Heart left ventricle (tissue), 16 donors: ENCODE measurements at regions of chr2 and their contacts with region 1.

Region 1: GRCh38 chr2:201084863-201085262 is 13.1 kb downstream of the NDUFB3 start:
- DNase-seq: no peak
- ATAC-seq: no peak
- H3K4me3 ChIP-seq: no peak overlapping the region
- H3K27ac ChIP-seq: no peak overlapping the region
- H3K4me1 ChIP-seq: peaks cover 0 to 4% (median 0%) of the 10 kb centered on the region in 12 donors
- H3K27me3 ChIP-seq: no peaks in the 10 kb centered on the region
- CTCF ChIP-seq: no peak
- POLR2A ChIP-seq: no peak

Region 2: GRCh38 chr2:200850512-200851256 is 234.2 kb before region 1 on chr2:
- intact Hi-C with region 1: no loop called
- DNase-seq: no peak
- ATAC-seq: peak; percentile 35 to 55 (median 40)
- H3K4me3 ChIP-seq: no peak overlapping the region
- H3K27ac ChIP-seq: no peak overlapping the region
- H3K4me1 ChIP-seq: peaks cover 0 to 3% (median 0%) of the 10 kb centered on the region in 12 donors
- H3K27me3 ChIP-seq: no peaks in the 10 kb centered on the region
- CTCF ChIP-seq: no peak
- POLR2A ChIP-seq: no peak

Region 3: DNA sequence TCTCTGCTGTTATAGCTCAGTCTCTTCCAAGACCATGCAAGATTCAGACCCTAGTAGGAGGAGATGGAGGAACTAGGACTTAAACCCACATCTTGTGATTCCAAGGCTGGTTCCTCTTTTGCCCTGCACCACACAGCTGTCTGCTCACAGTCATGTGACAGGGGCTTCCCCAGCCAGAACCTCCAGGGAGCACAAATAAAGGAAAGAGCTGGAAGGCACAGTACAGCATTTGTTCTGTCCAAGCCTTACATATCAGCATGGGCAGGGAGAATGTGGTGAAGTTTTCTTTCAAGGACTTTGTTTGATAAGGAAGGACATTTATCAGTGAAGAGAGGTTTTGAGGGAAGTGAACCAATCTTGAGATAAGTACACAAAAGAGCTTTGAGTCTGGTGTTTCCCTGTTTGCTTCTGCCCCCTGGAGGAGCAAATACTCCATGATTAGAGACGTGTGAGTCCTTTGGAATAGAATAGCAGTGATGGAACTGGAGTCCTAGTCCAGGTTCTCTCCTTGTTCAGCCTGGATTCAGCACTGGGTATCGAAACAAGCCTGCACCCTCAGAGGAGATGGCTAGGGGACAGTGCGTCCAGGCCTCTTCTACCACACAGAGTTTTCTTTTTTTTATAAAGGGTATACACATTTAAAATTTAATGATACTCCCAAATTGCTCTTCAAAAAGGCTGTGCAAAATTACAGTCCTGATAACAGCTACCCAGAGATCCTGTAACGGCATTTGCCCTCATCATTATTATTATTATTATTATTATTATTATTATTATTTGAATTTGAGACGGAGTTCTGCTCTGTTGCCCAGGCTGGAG is 73.5 kb after region 1 on chr2:
- intact Hi-C with region 1: loop called in 1 of 10 experiments (anchors 10 kb)
- DNase-seq: peak in 4 of 5 donors; percentile 62 to 73 (median 70)
- ATAC-seq: peak; percentile 69 to 92 (median 82)
- H3K4me3 ChIP-seq: no peak overlapping the region
- H3K27ac ChIP-seq: peak overlapping the region in 11 of 12 donors; percentile 20 to 89 (median 66)
- H3K4me1 ChIP-seq: peaks cover 2 to 62% (median 23%) of the 10 kb centered on the region in 12 donors
- H3K27me3 ChIP-seq: no peaks in the 10 kb centered on the region
- CTCF ChIP-seq: peak; percentile 48 to 79 (median 62)
- POLR2A ChIP-seq: peak in 1 of 2 donors; percentile 13